ENCODE measurements at regions of chr15 and their contacts with region 1.

Region 1: DNA sequence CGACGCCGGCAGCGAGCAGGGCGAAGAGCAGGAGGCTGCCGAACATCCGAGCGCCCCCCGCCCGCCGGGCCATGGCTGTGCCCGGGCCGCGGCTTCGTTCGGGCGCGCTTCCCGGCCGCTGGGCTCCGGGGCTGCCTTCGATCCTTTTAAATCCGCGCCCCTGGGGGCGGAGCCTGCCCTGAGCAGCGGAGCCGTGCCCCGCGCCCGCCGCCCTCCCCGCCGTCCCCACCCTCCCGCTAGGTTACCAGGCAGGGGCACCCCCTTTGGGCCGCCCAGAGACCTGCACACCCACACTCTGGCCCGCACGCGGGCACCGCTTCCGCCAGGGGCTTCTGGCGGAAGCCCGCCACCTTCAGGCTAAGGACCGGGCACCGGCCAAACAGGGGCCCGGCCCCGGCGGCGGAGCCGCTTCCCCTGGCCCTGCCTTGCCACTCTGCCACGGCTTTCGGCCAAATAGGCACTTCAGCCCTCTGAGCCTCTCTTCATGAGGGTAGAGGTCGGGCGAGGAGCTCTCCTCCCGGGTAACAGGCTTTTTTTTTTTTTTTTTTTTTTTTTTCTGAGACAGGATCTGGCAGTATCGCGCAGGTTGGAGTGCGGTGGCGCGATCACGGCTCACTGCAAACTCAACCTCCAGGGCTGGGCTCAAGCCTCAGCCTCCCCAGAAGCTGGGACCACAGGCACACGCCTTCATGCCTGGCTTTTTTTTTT is at the start of gene NMB:
- DNase-seq: peak; percentile 82 to 92 (median 87)
- ATAC-seq: peak; percentile 77
- H3K4me3 ChIP-seq: peak within 1 kb of the TSS; percentile 19 to 35
- H3K27ac ChIP-seq: peak within 1 kb of the TSS; percentile 68 to 87 (median 78)
- H3K4me1 ChIP-seq: peaks cover 32% of the 10 kb centered on the region
- H3K27me3 ChIP-seq: no peaks in the 10 kb centered on the region
- CTCF ChIP-seq: peak; percentile 57 to 96 (median 78)
- POLR2A ChIP-seq: peak; percentile 37 to 50 (median 38)
- total RNA-seq, gene NMB: 6.3 to 8.8 TPM

Region 2: DNA sequence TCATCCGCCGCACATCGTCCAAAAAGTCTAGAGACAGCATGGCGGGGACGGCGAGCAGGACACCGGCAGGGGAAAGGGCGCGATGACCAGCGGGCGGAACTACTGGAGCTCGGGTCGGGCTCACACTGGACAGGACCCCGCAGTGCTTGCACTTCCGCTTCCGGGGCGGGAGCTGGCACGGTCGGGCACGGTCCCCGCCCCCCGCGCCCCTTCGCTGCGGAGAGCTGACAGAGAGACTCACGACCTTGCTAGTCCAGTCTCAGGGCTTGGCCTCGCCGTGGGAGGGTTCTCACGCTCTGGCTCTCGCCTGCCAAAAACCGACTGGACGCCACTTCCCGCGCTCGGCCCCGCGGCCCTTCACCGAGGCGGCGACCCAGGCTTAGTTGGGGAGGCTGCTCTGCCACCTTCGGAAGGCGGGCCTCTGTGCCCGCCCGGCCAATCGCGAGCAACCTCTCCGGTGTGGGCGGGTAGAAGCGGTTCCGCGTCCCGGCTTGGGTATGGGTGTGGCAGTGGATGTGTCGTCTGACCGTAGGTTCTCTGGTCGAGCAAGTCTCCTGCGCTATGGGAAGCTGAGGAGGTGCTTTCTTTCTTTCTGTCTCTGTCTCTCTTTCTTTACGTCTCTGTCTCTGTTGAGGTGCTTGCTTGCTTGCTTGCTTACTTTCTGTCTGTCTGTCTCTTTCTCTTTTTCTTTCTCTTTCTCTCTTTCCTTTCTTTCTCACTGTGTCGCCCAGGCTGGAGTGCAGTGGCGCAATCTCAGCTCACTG is 58.0 kb after region 1 on chr15 and contains the start of gene SEC11A:
- intact Hi-C with region 1: no loop called
- DNase-seq: peak; percentile 94 to 96 (median 94)
- ATAC-seq: peak; percentile 98
- H3K4me3 ChIP-seq: peak within 1 kb of the TSS; percentile 79 to 90
- H3K27ac ChIP-seq: peak within 1 kb of the TSS; percentile 82 to 94 (median 91)
- H3K4me1 ChIP-seq: peaks cover 24% of the 10 kb centered on the region
- H3K27me3 ChIP-seq: no peaks in the 10 kb centered on the region
- CTCF ChIP-seq: peak in 1 of 7 experiments; percentile 21
- POLR2A ChIP-seq: peak; percentile 69 to 97 (median 96)
- total RNA-seq, gene SEC11A: 83.8 to 89.3 TPM

Region 3: DNA sequence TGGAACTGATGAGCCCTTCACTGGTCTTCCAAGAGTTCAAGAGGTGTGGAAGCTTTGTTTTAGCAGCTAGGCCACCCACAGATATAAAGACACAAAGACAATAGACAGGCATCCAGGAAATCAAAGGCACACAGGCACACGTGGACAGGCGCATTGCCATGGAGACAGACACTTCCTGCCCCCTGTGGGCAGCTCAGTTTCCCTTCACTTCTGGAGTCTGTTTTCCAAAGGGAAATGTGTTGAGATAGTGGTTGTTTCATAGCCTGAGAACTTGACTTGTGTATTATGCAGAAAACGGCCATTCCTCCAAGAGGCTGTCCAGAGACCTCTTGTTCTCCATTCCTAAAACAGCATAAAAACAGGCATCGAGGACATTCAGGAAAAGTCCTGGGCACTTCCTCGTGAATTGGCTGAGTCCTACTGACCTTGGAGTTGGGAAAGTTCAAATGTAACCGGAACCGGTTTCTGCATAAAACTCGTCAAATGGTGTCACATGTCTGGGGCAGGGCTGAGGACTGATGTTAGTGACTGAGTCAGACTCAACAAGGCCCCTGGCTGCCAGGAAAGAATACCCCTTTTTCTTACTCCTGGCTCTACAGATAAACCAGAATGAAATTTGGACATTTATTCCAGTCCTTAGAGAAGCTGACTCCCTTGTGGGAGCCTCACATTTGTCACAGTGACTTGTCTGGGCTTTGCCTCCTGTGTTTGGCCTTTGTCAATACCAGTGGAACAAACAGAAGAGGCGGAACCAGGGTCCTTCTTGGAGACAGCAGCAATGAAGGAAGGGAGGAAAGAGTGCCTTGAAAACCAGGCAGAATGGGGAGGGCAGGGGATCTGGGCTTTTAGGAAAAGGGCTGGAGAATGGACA is 160.3 kb after region 1 on chr15:
- intact Hi-C with region 1: no loop called
- DNase-seq: peak; percentile 50 to 83 (median 72)
- ATAC-seq: peak; percentile 75
- H3K4me3 ChIP-seq: no peak overlapping the region
- H3K27ac ChIP-seq: peak overlapping the region; percentile 76 to 82 (median 79)
- H3K4me1 ChIP-seq: peaks cover 28% of the 10 kb centered on the region
- H3K27me3 ChIP-seq: no peaks in the 10 kb centered on the region
- CTCF ChIP-seq: peak in 1 of 7 experiments; percentile 3
- POLR2A ChIP-seq: peak in 2 of 3 donors; percentile 26 to 29

Region 4: DNA sequence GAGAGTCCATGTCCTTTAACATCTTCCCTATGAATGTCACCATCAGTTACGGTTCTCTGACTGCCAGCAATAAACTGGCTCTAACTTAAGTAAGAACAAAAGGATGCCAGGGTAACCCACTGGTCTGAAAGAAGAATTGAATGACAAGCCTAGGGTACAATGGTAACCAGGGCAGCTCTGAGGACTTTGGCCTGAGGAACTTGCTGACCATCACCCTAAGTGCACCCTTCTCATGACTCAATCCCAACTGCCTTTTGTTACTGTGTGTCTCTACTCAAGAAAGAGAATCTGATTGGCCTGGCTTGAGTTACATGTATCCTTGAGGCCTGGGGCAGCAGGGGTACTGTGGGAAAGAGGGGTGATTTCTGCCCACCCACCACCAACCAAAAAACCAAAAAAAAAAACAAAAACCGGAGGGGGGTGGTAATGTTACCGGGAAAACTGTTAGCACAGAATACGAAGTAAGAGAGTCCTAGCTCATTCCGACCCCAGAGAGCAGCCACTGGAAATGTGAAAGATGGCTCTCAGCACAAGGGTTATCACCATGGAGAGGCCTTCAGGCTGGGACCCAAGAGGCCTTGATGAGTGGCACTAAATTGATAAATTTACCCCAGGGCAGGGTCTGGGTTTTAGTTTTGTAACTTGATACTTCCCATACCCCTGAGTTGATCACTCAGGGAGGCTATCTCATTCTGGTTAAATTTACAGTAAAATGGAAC is 216.9 kb after region 1 on chr15:
- intact Hi-C with region 1: no loop called
- DNase-seq: no peak
- ATAC-seq: no peak
- H3K4me3 ChIP-seq: no peak overlapping the region
- H3K27ac ChIP-seq: no peak overlapping the region
- H3K4me1 ChIP-seq: peaks cover 9% of the 10 kb centered on the region
- H3K27me3 ChIP-seq: no peaks in the 10 kb centered on the region
- CTCF ChIP-seq: no peak
- POLR2A ChIP-seq: no peak

Region 5: GRCh38 chr15:84929744-84930371 is 271.6 kb after region 1 on chr15:
- intact Hi-C with region 1: loop called (anchors 10 kb)
- DNase-seq: peak; percentile 43 to 72 (median 64)
- ATAC-seq: peak; percentile 65
- H3K4me3 ChIP-seq: no peak overlapping the region
- H3K27ac ChIP-seq: peak overlapping the region in 1 of 4 donors; percentile 45
- H3K4me1 ChIP-seq: peaks cover 14% of the 10 kb centered on the region
- H3K27me3 ChIP-seq: no peaks in the 10 kb centered on the region
- CTCF ChIP-seq: no peak
- POLR2A ChIP-seq: no peak